ENCODE measurements at regions of chr2 and their contacts with region 1.

Region 1: GRCh38 chr2:20642055-20642971 is 8.6 kb downstream of the HS1BP3 start:
- DNase-seq: no peak
- H3K4me3 ChIP-seq: no peak overlapping the region
- H3K27ac ChIP-seq: no peak overlapping the region
- H3K27me3 ChIP-seq: no peaks in the 10 kb centered on the region
- CTCF ChIP-seq: peak; percentile 94

Region 2: GRCh38 chr2:20398956-20399567 is 243.3 kb before region 1 on chr2:
- CTCF ChIA-PET with region 1: interaction called, 24 read pairs
- POLR2A ChIA-PET with region 1: interaction called, 3 read pairs
- DNase-seq: no peak
- H3K4me3 ChIP-seq: no peak overlapping the region
- H3K27ac ChIP-seq: no peak overlapping the region
- H3K27me3 ChIP-seq: peaks cover 19% of the 10 kb centered on the region
- CTCF ChIP-seq: no peak

Region 3: DNA sequence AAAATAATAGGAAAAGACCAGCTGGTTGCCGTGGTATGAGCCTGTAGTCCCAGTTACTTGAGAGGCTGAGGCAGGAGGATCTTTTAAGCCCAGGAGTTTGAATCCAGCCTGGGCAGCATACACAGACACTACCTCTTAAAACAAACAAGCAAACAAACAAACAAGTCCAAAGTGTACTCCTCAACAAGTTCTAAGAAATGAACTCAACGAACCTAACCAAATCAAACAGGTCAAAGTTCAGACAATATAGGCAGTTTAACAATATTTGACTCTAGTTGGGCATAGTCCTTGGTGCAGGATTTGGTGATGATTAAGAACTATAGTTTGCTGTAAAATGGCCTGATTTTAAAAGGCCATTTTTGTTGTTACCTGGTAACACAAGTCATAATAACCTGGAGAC is 237.4 kb before region 1 on chr2:
- CTCF ChIA-PET with region 1: interaction called, 118 read pairs
- POLR2A ChIA-PET with region 1: interaction called, 3 read pairs
- DNase-seq: no peak
- H3K4me3 ChIP-seq: no peak overlapping the region
- H3K27ac ChIP-seq: no peak overlapping the region
- H3K27me3 ChIP-seq: peaks cover 10% of the 10 kb centered on the region
- CTCF ChIP-seq: no peak

Region 4: DNA sequence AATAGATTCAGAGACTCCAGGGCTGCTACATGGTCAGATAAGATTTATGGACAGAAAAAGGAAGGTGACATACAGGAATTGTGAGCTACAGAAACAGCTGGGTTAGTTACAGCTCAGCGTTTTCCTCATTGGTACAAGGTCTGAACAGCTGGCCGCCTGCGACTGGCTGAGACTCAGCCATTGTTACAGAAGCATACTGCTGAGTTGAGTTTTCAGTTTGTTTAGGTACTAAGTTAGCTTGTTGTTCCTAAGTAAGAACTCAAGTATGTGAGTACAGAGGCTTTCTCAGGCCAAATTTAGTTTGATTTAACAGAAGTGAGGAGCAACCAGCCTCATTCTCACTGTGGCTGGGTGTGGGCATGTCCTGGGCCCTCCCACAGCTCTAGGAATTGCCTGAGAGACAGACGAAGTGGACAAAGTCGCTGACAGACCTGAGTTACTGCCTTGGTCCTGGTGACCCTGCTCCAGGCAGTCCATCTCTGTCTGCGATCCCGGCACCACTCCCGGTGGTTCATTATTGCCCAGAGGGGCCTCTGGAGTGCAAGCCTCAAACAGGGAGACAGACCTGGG is 223.2 kb before region 1 on chr2:
- CTCF ChIA-PET with region 1: interaction called, 118 read pairs
- POLR2A ChIA-PET with region 1: interaction called, 4 read pairs
- DNase-seq: peak; percentile 42
- H3K4me3 ChIP-seq: no peak overlapping the region
- H3K27ac ChIP-seq: peak overlapping the region; percentile 24
- H3K27me3 ChIP-seq: no peaks in the 10 kb centered on the region
- CTCF ChIP-seq: no peak

Region 5: GRCh38 chr2:20430461-20431300 is 211.6 kb before region 1 on chr2:
- CTCF ChIA-PET with region 1: interaction called, 14 read pairs
- POLR2A ChIA-PET with region 1: no interaction called
- DNase-seq: no peak
- H3K4me3 ChIP-seq: no peak overlapping the region
- H3K27ac ChIP-seq: no peak overlapping the region
- H3K27me3 ChIP-seq: peaks cover 4% of the 10 kb centered on the region
- CTCF ChIP-seq: no peak

Region 6: GRCh38 chr2:20438334-20439192 is 203.8 kb before region 1 on chr2:
- CTCF ChIA-PET with region 1: interaction called, 79 read pairs
- POLR2A ChIA-PET with region 1: interaction called, 6 read pairs
- DNase-seq: no peak
- H3K4me3 ChIP-seq: no peak overlapping the region
- H3K27ac ChIP-seq: peak overlapping the region; percentile 69
- H3K27me3 ChIP-seq: no peaks in the 10 kb centered on the region
- CTCF ChIP-seq: no peak

Region 7: GRCh38 chr2:20868377-20868776 is 226.1 kb after region 1 on chr2:
- CTCF ChIA-PET with region 1: no interaction called
- POLR2A ChIA-PET with region 1: no interaction called
- DNase-seq: no peak
- H3K4me3 ChIP-seq: no peak overlapping the region
- H3K27ac ChIP-seq: no peak overlapping the region
- H3K27me3 ChIP-seq: no peaks in the 10 kb centered on the region
- CTCF ChIP-seq: no peak

Measured in AG04450 (cell line).